ENCODE measurements at regions of chr10 and their contacts with region 1.

Region 1: GRCh38 chr10:103333925-103334520 is 16.9 kb downstream of the PCGF6 start:
- DNase-seq: no peak

Region 2: DNA sequence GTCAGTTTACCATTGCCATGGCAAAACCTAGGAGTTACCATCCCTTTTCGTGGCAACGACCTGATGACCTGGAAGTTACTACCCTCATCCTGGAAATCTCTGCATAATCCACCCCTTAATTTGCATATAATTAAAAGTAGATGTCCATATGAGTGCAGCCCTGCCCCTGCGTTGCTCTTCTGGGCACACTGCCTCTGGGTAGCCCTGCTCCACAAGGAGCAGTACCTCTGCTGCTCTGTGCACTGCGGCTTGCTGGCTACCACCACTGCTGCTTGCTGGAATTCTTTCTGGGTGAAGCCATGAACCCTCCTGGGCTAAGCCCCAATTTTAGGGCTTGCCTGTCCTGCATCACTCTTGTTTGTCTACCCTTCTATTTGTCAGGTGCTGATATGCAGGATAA is 509.4 kb before region 1 on chr10:
- intact Hi-C with region 1: loop called (anchors 5 kb)
- DNase-seq: no peak

Region 3: DNA sequence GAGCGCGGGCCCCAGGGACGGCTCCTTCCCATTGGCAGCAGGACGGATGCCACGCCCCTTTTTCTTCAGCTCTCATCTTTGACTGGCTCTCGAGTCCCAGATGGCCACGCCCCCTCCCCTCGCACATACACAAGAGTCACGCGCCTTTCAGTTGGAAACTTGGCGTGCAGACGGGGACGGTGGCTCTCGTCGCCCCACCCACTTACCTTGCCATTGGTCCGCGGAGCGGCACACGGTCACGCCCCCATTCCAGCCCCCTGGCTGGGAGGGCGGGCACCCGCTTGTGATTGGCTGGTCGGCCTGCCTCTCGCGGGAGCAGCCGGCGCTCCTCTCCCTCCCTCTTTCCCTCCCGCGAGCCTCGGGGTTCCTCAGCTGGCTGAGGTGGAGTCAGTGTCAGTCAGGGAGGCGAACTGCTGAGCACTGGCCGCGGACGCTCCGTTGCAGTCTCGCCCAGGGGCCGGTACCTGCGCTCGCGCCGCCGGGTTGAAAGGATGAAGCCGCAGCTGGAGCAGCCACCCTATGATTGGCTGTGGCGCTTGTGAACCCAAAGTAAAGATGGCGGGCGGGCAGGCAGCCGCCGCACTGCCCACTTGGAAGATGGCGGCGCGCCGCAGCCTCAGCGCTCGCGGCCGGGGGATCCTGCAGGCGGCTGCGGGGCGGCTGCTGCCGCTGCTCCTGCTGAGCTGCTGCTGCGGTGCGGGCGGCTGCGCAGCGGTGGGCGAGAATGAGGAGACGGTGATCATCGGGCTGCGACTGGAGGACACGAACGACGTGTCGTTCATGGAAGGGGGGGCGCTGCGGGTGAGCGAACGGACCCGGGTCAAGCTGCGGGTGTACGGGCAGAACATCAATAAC is 415.8 kb before region 1 on chr10 and contains the start of gene CNNM2:
- intact Hi-C with region 1: loop called (anchors 10 kb)
- DNase-seq: peak; percentile 100
- total RNA-seq, gene CNNM2: 5.9 TPM

Measured in cardiac septum (tissue), 1 donor.